Ovary (tissue), 10 donors: ENCODE measurements at regions of chr9 and their contacts with region 1.

Region 1: DNA sequence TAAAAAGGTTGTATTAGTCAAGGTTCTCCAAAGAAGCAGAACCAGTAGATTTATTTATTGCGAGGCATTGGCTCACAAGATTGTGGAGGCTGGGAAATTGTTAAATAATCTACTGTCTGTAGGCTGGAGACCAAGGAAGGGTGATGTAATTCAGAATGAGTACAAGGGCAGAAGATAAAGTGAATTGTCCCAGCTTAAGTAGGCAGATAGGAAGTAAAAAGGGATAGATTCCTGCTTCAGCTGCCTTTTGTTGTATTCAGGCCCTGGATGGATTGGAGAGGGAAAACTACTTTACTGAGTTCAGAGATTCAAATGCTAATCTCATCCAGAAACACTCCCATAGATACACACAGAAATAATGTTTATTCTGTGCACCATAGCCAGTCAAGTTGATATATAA is 301.1 kb downstream of the CYLC2 start:
- DNase-seq: no peak
- H3K4me3 ChIP-seq: no peak overlapping the region
- H3K27ac ChIP-seq: no peak overlapping the region
- H3K4me1 ChIP-seq: no peaks in the 10 kb centered on the region
- H3K27me3 ChIP-seq: no peaks in the 10 kb centered on the region
- CTCF ChIP-seq: no peak
- EP300 ChIP-seq: no peak
- POLR2A ChIP-seq: no peak

Region 2: GRCh38 chr9:103242025-103242424 is 54.2 kb before region 1 on chr9:
- intact Hi-C with region 1: loop called in 1 of 4 experiments (anchors 10 kb)
- DNase-seq: no peak
- H3K4me3 ChIP-seq: no peak overlapping the region
- H3K27ac ChIP-seq: no peak overlapping the region
- H3K4me1 ChIP-seq: no peaks in the 10 kb centered on the region
- H3K27me3 ChIP-seq: no peaks in the 10 kb centered on the region
- CTCF ChIP-seq: no peak
- EP300 ChIP-seq: no peak
- POLR2A ChIP-seq: no peak

Region 3: GRCh38 chr9:103364753-103365152 is 68.6 kb after region 1 on chr9:
- intact Hi-C with region 1: no loop called
- DNase-seq: no peak
- H3K4me3 ChIP-seq: no peak overlapping the region
- H3K27ac ChIP-seq: no peak overlapping the region
- H3K4me1 ChIP-seq: no peaks in the 10 kb centered on the region
- H3K27me3 ChIP-seq: no peaks in the 10 kb centered on the region
- CTCF ChIP-seq: no peak
- EP300 ChIP-seq: no peak
- POLR2A ChIP-seq: no peak

Region 4: GRCh38 chr9:105233873-105234272 is 1937.7 kb after region 1 on chr9:
- intact Hi-C with region 1: no loop called
- DNase-seq: no peak
- H3K4me3 ChIP-seq: no peak overlapping the region
- H3K27ac ChIP-seq: no peak overlapping the region
- H3K4me1 ChIP-seq: no peaks in the 10 kb centered on the region
- H3K27me3 ChIP-seq: no peaks in the 10 kb centered on the region
- CTCF ChIP-seq: no peak
- EP300 ChIP-seq: no peak
- POLR2A ChIP-seq: no peak